Caco-2 (cell line): ENCODE measurements at regions of chr1 and their contacts with region 1.

Region 1: GRCh38 chr1:179105350-179105749 is 23.5 kb downstream of the TOR3A start:
- DNase-seq: peak in 1 of 2 experiments; percentile 59
- H3K4me3 ChIP-seq: no peak overlapping the region
- H3K4me3 Mint-ChIP-seq: no peak overlapping the region
- H3K27ac Mint-ChIP-seq: no peak overlapping the region
- H3K4me1 ChIP-seq: no peaks in the 10 kb centered on the region
- H3K4me1 Mint-ChIP-seq: peaks cover 5% of the 10 kb centered on the region
- H3K27me3 ChIP-seq: no peaks in the 10 kb centered on the region
- H3K27me3 Mint-ChIP-seq: no peaks in the 10 kb centered on the region
- CTCF ChIP-seq: peak; percentile 61 to 65

Region 2: GRCh38 chr1:179190861-179191260 is 85.5 kb after region 1 on chr1:
- CTCF ChIA-PET with region 1: interaction called, 3 read pairs
- POLR2A ChIA-PET with region 1: no interaction called
- intact Hi-C with region 1: loop called (anchors 5 kb)
- DNase-seq: no peak
- H3K4me3 ChIP-seq: no peak overlapping the region
- H3K4me3 Mint-ChIP-seq: no peak overlapping the region
- H3K27ac Mint-ChIP-seq: no peak overlapping the region
- H3K4me1 ChIP-seq: no peaks in the 10 kb centered on the region
- H3K4me1 Mint-ChIP-seq: no peaks in the 10 kb centered on the region
- H3K27me3 ChIP-seq: no peaks in the 10 kb centered on the region
- H3K27me3 Mint-ChIP-seq: no peaks in the 10 kb centered on the region
- CTCF ChIP-seq: no peak